Head of caudate nucleus (tissue), 42 donors: ENCODE measurements at regions of chr6 and their contacts with region 1.

Region 1: GRCh38 chr6:15245361-15246216 is at the start of gene JARID2:
- DNase-seq: peak; percentile 92 to 99 (median 97)

Region 2: GRCh38 chr6:14210663-14211561 is 1034.7 kb before region 1 on chr6:
- intact Hi-C with region 1: loop called (anchors 2 kb)
- DNase-seq: peak; percentile 80 to 96 (median 92)

Region 3: DNA sequence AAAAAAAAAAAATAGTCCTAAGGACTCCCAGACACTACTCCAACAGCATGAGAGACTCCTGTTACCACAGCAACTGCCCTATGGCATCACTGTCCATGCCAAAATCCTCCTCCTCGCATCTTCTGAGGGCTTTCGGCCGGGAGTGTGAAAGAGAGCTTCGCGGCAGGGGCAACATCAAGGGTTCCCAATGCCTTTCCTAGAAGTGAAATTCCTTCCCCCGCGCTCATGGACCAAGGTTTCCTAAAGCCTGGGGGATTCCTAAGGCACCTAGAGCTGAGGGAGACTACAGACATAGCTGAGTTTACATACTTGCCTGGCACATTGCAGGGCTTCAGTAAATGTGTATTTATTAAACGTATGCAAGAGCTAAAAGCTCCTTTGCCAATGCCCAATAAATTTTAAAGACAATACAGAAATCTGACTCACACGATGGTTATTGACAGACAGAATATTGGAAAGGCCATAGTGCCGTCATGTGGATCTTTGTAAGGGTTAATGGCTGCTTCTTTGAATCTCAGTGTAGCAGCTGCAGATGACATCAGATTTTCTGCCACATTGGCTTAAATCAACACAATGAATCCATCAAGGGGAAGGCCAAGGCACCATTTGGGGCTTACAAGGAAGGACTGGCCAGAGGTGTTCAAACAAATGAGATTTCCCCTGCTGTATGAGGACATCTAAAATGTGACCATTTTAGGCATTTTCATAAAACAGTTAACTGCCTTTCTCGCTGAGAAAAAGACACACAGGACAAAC is 280.9 kb before region 1 on chr6:
- intact Hi-C with region 1: no loop called
- DNase-seq: peak in 1 of 42 donors; percentile 22

Region 4: DNA sequence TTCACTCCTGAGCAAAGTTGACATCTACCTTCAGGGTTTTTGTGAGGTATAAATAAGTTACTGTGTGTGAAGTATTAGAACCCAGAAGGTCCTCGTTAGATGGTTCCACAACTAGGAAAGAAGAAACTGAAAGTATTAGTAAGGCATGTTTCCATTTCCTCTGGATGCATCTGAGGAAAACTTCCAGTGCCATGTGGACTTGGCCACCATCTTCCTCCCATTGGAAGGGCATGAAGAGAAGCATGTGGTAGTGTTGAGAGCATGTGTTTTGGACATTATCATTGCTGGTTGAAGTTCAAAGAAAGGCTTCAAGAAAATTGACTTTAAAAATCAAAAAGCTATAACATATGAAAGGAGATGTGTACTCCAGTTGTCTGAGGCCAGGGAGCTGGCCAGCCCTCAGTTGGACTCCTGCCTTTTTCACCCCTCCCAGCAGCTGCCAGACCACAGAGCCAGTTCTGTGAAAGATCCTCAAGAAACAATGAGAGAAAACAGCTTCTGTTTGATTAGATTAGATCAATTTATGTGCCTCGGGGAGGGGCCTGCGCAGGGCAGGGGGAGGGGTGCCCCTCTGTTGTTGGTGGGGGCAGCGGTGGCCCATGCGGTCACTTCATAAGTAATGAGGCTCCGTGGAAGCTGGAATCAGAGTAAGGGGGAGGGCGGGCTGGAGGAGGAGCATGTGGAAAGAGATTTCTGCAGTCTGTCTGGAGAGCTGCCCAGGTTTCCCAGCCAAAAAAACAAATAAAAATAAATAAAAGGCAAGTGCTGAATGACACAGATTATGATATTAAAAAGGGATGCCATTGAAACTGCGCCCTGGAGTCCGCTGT is 154.3 kb after region 1 on chr6:
- intact Hi-C with region 1: loop called (anchors 5 kb)
- DNase-seq: peak; percentile 62 to 93 (median 80)

Region 5: DNA sequence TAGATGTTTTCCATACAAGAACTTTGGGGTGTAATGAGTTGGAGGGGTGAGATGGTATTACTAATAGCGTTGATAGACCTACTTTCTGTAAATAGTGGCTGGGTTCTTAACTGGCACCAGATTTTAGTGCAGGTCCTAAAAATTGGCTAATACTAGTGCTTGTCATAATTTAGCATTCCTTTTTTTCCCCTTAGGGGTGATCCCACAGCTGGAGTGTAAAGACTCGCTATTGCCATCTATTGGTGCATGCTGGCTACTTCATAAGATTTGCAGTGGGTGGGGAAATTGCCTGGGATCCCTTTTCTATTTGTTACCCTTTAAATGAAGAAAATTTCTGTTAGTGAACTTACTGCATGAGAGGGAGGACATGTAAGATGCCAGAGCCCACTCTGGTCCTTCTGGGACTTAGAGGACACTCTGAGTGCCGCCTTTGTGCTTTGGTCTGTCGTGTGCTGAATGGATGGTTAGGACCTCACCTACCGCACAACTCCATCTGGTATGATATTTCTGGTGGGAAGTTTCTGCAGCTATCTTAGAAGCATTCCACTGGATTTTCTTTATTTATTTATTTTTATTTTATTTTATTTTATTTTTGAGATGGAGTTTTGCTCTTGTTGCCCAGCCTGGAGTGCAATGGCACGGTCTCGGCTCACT is 195.8 kb after region 1 on chr6:
- intact Hi-C with region 1: loop called (anchors 5 kb)
- DNase-seq: peak in 27 of 42 donors; percentile 10 to 82 (median 53)